HEK293 (cell line): ENCODE measurements at regions of chr1 and their contacts with region 1.

Region 1: DNA sequence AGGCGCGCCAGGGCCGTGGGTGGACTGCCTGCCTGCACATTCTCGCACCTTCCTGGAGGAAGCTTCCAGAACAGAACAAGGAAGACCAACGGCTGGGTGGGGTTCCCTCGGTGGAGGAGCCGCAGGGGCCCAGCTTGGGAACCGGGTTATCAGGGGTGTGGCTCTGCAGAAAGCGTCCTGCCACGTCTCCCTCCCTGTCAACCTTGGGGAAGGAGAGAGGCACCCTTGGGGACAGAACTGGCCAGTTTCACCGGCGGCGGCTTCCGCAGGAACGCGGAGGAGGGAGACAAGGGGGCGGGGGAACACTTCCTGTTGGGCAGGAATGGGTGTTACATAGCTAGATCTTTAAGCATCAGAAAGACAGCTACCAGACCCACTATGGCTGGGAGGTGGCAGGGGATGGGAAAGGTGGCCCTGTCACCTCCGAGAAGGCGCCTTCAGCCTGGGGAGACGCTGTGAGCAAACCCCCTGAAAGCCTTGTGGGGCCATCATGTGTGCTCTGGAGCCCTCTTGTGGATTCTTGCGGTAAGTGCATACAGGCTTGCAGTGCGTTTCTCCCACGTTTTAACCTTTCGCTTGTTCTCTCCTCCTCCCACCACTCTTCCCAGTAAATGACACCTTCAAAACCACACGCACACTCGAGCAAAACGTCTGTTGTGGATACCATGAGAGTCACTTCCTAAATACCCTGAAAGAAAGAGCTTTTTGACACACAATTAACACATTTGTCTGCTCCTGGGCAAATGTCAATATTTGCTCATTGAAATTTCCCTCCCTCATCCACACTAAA is 3.8 kb upstream of the PLEKHA6 start:
- H3K4me3 ChIP-seq: peak overlapping the region; percentile 38
- H3K27ac ChIP-seq: no peak overlapping the region
- H3K4me1 ChIP-seq: no peaks in the 10 kb centered on the region; the same call in 1 of the 2 replicates
- CTCF ChIP-seq: peak; percentile 98

Region 2: GRCh38 chr1:204128964-204129896 is 234.3 kb before region 1 on chr1:
- CTCF ChIA-PET with region 1: interaction called, 20 read pairs
- POLR2A ChIA-PET with region 1: no interaction called
- H3K4me3 ChIP-seq: no peak overlapping the region
- H3K27ac ChIP-seq: no peak overlapping the region
- H3K4me1 ChIP-seq: 0 out of 2 replicates have a peak, but pooled peaks cover 3% of the 10 kb centered on the region
- CTCF ChIP-seq: peak; percentile 83

Region 3: GRCh38 chr1:204213668-204214662 is 149.6 kb before region 1 on chr1 and contains the start of gene GOLT1A:
- CTCF ChIA-PET with region 1: interaction called, 49 read pairs
- POLR2A ChIA-PET with region 1: no interaction called
- H3K4me3 ChIP-seq: peak within 1 kb of the TSS; percentile 36
- H3K27ac ChIP-seq: no peak within 1 kb of the TSS
- H3K4me1 ChIP-seq: no peaks in the 10 kb centered on the region
- CTCF ChIP-seq: no peak

Region 4: GRCh38 chr1:204263254-204263910 is 100.1 kb before region 1 on chr1:
- CTCF ChIA-PET with region 1: interaction called, 164 read pairs
- POLR2A ChIA-PET with region 1: no interaction called
- H3K4me3 ChIP-seq: no peak overlapping the region
- H3K27ac ChIP-seq: no peak overlapping the region
- H3K4me1 ChIP-seq: no peaks in the 10 kb centered on the region
- CTCF ChIP-seq: no peak

Region 5: GRCh38 chr1:204341380-204341779 is 22.1 kb before region 1 on chr1:
- CTCF ChIA-PET with region 1: interaction called, 12 read pairs
- POLR2A ChIA-PET with region 1: no interaction called
- H3K4me3 ChIP-seq: no peak overlapping the region
- H3K27ac ChIP-seq: no peak overlapping the region
- H3K4me1 ChIP-seq: peaks cover 2% of the 10 kb centered on the region; the same call in 1 of the 2 replicates
- CTCF ChIP-seq: no peak

Region 6: GRCh38 chr1:204384994-204385352 is 21.4 kb after region 1 on chr1:
- CTCF ChIA-PET with region 1: interaction called, 15 read pairs
- POLR2A ChIA-PET with region 1: no interaction called
- H3K4me3 ChIP-seq: no peak overlapping the region
- H3K27ac ChIP-seq: no peak overlapping the region
- H3K4me1 ChIP-seq: no peaks in the 10 kb centered on the region
- CTCF ChIP-seq: no peak